ENCODE measurements at regions of chr2 and their contacts with region 1.

Region 1: DNA sequence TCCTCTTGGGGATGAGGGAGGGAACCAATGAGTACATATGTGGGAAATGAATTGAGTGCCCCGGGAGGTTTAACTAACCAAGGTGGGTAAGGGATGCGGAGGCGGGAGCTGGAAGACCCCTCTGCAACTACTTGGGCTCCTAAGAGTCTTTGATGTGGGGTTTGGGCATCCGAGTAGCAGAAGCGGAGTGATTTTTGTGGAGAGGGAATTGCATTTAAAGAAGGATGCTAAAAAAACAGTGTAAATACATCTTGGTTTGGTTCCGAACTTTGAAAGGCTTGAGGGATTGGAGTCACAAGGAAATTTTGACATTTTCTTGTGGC is 215.7 kb downstream of the MCFD2 start:
- DNase-seq: no peak
- ATAC-seq: no peak
- H3K4me3 ChIP-seq: peak overlapping the region; percentile 69 to 94 (median 79)
- H3K27ac ChIP-seq: peak overlapping the region; percentile 92 to 99 (median 95)
- H3K4me1 ChIP-seq: peaks cover 2 to 58% (median 47%) of the 10 kb centered on the region in 9 donors
- H3K27me3 ChIP-seq: no peaks in the 10 kb centered on the region
- CTCF ChIP-seq: no peak

Region 2: GRCh38 chr2:46763861-46764260 is 64.0 kb after region 1 on chr2:
- intact Hi-C with region 1: loop called in 2 of 10 experiments (anchors 5 kb)
- DNase-seq: no peak
- ATAC-seq: no peak
- H3K4me3 ChIP-seq: no peak overlapping the region
- H3K27ac ChIP-seq: no peak overlapping the region
- H3K4me1 ChIP-seq: peaks cover 0 to 14% (median 0%) of the 10 kb centered on the region in 9 donors
- H3K27me3 ChIP-seq: no peaks in the 10 kb centered on the region
- CTCF ChIP-seq: no peak

Measured in heart right ventricle (tissue), 16 donors.